Dendritic cell treated with granulocyte-macrophage colony-stimulating factor and Interleukin-4, amounts not matched to agents 40 ng/mL and 50 ng/mL, for 4 days (primary cell): ENCODE measurements at regions of chr5 and their contacts with region 1.

Region 1: GRCh38 chr5:22908129-22908528 is 55.0 kb upstream of the CDH12 start:
- H3K4me3 Mint-ChIP-seq: no peak overlapping the region
- H3K27ac Mint-ChIP-seq: no peak overlapping the region
- H3K4me1 Mint-ChIP-seq: no peaks in the 10 kb centered on the region
- H3K27me3 Mint-ChIP-seq: no peaks in the 10 kb centered on the region

Region 2: DNA sequence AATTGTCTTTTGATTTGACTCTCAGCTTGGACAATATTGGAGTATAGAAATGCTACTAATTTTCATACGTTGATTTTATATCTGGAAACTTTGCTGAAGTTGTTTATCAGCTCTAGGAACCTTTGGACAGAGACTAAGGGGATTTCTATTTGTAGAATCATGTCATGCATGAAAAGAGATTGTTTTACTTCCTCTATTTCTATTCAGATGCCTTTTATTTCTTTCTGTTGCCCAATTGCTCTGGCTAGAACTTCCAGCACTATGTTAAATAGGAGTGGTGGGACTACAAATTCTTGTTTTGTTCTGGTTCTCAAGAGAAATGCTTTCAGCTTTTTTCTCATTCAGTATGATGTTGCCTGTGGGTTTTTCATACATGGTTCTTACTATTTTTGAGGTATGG is 57.8 kb after region 1 on chr5:
- intact Hi-C with region 1: no loop called
- H3K4me3 Mint-ChIP-seq: no peak overlapping the region
- H3K27ac Mint-ChIP-seq: no peak overlapping the region
- H3K4me1 Mint-ChIP-seq: no peaks in the 10 kb centered on the region
- H3K27me3 Mint-ChIP-seq: no peaks in the 10 kb centered on the region

Region 3: GRCh38 chr5:22985446-22985845 is 77.3 kb after region 1 on chr5:
- intact Hi-C with region 1: loop called (anchors 10 kb)
- H3K4me3 Mint-ChIP-seq: no peak overlapping the region
- H3K27ac Mint-ChIP-seq: no peak overlapping the region
- H3K4me1 Mint-ChIP-seq: no peaks in the 10 kb centered on the region
- H3K27me3 Mint-ChIP-seq: no peaks in the 10 kb centered on the region